Adrenal gland (tissue), 19 donors: ENCODE measurements at regions of chr6 and their contacts with region 1.

Region 1: DNA sequence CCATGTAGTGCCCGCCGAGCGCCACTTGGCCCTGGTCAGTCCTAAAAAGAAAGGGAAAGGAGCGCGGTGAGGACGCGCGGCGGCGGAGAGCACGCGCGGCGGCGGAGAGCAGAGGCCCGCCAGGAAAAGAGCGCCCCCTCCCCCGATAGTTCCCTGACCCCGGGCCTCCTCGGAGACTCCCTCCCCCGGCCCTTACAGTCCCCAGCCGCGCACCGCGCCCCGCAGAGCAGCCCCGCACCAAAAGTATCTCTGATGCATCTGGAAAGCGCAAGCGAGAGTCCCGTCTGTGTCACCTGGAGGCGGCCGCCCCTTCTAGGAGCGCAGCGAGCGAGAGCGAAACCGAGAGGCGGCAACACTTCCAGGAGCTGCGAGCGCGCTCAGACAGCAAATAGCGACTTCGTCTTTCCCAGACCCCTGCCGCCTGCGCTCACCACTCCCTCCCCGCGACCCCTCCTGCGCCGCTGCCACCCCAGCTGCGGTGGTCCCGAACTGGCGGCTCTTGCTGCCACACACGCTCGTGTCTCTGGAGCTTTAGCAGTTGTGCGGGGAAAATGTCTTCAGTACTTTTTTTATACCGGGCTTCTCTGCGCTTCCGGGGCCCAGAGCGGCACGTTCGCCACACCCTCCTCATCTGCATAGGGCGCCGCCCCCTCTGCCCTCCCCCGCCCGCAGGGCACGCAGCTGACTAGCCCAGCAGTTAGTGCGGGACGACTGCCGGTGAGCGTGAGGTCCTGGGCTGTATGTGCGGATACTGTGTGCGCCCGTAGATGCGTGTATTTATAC is at the start of gene TENT5A:
- DNase-seq: peak; percentile 94 to 97 (median 95)
- H3K4me3 ChIP-seq: peak within 1 kb of the TSS; percentile 68 to 98 (median 86)
- H3K27ac ChIP-seq: peak within 1 kb of the TSS; percentile 73 to 98 (median 98)
- H3K4me1 ChIP-seq: peaks cover 6 to 35% of the 10 kb centered on the region in 2 donors
- H3K27me3 ChIP-seq: no peaks in the 10 kb centered on the region
- CTCF ChIP-seq: peak in 1 of 6 experiments; percentile 3
- POLR2A ChIP-seq: peak; percentile 81 to 93
- total RNA-seq, gene TENT5A: 4.4 to 24.6 (median 15.4) TPM

Region 2: DNA sequence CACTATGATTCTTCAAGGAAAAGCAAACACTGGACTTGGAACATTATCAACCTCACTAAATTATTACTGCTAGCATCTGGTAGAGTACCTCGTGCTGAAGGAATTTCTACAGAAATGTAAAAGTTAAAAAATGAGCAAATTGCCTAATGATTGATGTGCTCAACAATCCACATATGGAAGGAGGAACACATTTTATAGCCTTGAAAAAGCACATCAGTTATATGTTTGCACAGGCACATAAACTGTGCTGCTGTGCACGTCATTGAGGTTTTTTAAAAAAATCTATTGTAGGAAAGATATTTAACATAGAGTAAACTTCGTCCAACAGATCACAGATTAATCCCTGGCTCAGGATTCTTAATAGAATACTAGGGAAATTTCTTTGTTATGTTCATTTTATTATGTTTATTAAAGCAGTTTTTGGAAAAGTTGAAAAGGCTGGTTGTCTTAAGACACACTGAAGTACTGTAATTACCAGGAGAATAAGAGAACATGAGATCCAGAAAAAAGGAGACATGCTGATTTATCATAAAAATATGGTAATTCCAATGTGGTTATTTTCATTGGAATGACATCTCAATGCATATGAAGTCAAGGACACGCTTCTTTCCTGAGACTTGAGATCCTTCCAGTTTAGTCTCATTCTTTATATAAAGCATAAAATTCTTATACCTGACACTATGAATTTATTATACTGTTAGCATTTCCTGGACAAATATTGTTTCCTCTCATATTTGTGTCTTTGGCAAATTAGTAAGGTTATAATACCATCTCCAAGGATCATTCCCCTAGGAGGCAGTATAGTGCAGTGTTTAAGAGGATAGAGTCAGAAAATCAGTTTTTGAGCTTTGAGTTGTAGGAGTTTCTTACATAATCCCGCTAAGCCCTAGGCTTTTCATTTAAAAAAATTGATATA is 510.9 kb before region 1 on chr6:
- intact Hi-C with region 1: loop called in 1 of 2 experiments (anchors 10 kb)
- DNase-seq: no peak
- H3K4me3 ChIP-seq: no peak overlapping the region
- H3K27ac ChIP-seq: no peak overlapping the region
- H3K4me1 ChIP-seq: no peaks in the 10 kb centered on the region
- H3K27me3 ChIP-seq: no peaks in the 10 kb centered on the region
- CTCF ChIP-seq: peak; percentile 31 to 63 (median 52)
- POLR2A ChIP-seq: no peak

Region 3: DNA sequence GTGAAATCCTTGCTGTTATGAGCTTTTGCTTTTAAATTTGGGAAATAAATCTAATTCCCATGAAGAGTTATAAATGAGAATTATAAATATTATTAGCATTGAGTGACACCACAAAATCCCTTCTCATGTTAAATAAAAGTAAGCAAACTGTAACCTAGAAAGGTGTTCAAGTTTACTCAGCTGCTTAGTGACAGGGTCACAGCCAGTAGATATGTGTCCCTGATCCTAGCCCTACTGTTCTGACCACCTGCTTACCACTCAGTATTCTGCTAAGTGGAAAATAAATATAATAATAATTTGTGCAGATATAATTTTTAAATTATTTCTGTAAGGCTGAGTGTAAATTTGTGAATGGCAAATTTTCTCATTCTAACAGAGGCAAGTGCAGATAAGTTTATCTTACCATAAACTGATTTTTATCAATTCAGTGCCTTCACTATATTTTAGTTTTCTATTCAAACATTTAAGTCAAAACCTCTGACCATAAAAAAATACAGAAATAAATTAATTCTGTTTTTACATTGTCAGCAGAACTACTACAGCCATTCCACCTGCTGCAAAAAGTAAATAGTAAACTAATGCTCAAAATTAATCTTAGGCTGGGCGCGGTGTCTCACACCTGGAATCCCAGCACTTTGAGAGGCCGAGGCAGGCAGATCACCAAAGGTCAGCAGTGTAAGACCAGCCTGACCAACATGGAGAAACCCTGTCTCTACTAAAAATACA is 118.0 kb before region 1 on chr6:
- intact Hi-C with region 1: no loop called
- DNase-seq: no peak
- H3K4me3 ChIP-seq: no peak overlapping the region
- H3K27ac ChIP-seq: no peak overlapping the region
- H3K4me1 ChIP-seq: no peaks in the 10 kb centered on the region
- H3K27me3 ChIP-seq: no peaks in the 10 kb centered on the region
- CTCF ChIP-seq: no peak
- POLR2A ChIP-seq: no peak

Region 4: GRCh38 chr6:81683928-81684327 is 68.4 kb before region 1 on chr6:
- intact Hi-C with region 1: no loop called
- DNase-seq: no peak
- H3K4me3 ChIP-seq: no peak overlapping the region
- H3K27ac ChIP-seq: no peak overlapping the region
- H3K4me1 ChIP-seq: peaks cover 0 to 6% of the 10 kb centered on the region in 2 donors
- H3K27me3 ChIP-seq: no peaks in the 10 kb centered on the region
- CTCF ChIP-seq: no peak
- POLR2A ChIP-seq: no peak

Region 5: DNA sequence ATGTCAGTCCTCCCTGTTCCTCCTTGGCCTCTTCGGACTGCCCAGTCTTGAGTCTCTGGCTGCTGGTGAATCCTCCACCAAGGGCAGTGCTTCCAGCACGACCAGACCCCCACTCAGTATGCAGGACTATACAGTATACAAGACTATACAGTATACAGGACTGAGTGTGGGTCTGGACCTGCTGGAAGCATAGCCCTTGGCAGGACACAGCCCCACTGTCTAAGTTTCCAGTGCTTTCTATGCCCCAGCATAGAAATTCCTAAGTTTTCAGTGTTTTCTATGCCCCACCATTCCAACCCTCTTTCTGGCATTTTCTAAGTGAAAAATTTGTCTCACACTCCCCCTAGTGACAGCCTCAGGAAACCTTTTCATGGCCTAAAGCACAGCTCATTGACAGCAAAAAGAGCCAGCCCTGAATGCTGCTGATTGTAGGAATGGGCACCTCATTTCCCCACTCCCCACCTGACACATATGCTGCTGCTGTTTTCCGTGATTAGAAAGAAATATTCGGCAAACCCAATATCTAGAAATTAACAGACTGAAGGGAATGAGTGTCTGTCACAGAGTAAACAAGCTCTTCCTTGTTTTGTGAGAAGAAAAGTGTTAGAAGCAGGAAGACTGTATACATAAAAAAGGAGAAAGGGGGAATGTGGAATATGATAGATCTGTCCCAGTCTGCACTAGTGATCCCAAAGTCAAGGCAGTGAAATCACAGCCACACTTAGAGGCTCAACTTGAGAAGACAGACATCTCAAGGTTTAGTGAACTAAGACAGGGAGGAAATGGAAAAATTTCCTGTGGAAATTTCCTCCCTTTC is 288.3 kb after region 1 on chr6:
- intact Hi-C with region 1: loop called in 1 of 2 experiments (anchors 10 kb)
- DNase-seq: peak; percentile 40 to 76 (median 60)
- H3K4me3 ChIP-seq: no peak overlapping the region
- H3K27ac ChIP-seq: no peak overlapping the region
- H3K4me1 ChIP-seq: peaks cover 0 to 6% of the 10 kb centered on the region in 2 donors
- H3K27me3 ChIP-seq: no peaks in the 10 kb centered on the region
- CTCF ChIP-seq: peak; percentile 65 to 84 (median 76)
- POLR2A ChIP-seq: no peak

Region 6: GRCh38 chr6:82525775-82526537 is 773.6 kb after region 1 on chr6:
- intact Hi-C with region 1: no loop called
- DNase-seq: no peak
- H3K4me3 ChIP-seq: no peak overlapping the region
- H3K27ac ChIP-seq: no peak overlapping the region
- H3K4me1 ChIP-seq: no peaks in the 10 kb centered on the region
- H3K27me3 ChIP-seq: no peaks in the 10 kb centered on the region
- CTCF ChIP-seq: no peak
- POLR2A ChIP-seq: no peak